ENCODE measurements at regions of chr1 and their contacts with region 1.

Region 1: GRCh38 chr1:11248155-11248554 is 14.2 kb downstream of the MTOR start:
- DNase-seq: no peak
- ATAC-seq: no peak
- H3K4me3 ChIP-seq: no peak overlapping the region
- H3K27ac ChIP-seq: no peak overlapping the region
- H3K4me1 ChIP-seq: no peaks in the 10 kb centered on the region
- H3K27me3 ChIP-seq: no peaks in the 10 kb centered on the region

Region 2: GRCh38 chr1:11134251-11134897 is 113.8 kb before region 1 on chr1:
- intact Hi-C with region 1: loop called in 1 of 4 experiments (anchors 10 kb)
- DNase-seq: peak in 2 of 3 donors; percentile 27 to 63
- ATAC-seq: peak; percentile 36 to 40
- H3K4me3 ChIP-seq: no peak overlapping the region
- H3K27ac ChIP-seq: no peak overlapping the region
- H3K4me1 ChIP-seq: peaks cover 5% of the 10 kb centered on the region
- H3K27me3 ChIP-seq: no peaks in the 10 kb centered on the region

Region 3: DNA sequence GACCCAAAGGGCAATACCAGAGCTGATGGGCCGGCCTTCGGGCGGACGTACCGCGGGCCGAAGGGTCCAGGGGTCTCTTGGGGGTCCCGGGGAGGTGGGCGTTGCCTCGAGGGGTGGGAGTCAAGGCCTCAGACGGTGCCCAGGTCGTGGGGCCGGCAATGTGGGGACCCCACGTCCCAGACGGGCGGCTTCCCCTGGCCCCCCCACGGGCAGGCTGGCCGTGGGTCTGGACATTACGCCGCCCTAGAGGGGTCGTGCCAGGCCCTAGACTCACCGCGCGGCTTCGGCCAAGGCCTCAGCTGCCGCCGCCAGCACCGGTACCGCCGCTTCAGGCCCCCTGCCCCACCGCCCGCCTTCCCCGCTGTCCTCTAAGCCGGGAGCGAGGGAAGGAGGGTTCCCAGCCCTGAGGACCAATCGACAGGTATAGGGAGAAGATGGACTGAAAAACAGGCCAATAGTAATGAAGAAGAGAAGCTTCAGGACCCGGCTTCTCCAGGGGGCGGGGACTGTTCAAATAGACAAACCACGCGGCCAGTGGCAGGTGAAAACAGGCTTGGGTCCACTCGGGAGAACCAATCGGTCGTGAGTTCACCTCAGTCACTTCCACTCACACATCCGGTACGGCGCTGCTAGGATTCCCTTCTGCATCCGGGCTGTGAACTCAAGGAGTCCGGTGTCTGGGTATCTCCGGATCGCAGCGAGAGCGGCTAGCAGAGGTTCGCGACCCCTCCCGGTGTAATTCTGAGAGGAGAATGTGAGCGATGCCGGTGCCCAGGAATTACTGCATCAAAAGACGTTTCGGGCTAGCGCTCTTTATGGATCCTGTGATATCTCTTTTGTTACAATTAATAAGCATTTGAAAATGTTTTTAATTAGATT is 14.3 kb after region 1 on chr1 and contains the start of gene MTOR:
- intact Hi-C with region 1: no loop called
- DNase-seq: peak; percentile 98 to 99 (median 98)
- ATAC-seq: peak; percentile 99 to 100
- H3K4me3 ChIP-seq: peak within 1 kb of the TSS; percentile 90
- H3K27ac ChIP-seq: peak within 1 kb of the TSS; percentile 78
- H3K4me1 ChIP-seq: no peaks in the 10 kb centered on the region
- H3K27me3 ChIP-seq: no peaks in the 10 kb centered on the region
- total RNA-seq, gene MTOR: 26.6 to 35.5 (median 28.6) TPM